HEK293 (cell line): ENCODE measurements at regions of chr4 and their contacts with region 1.

Region 1: DNA sequence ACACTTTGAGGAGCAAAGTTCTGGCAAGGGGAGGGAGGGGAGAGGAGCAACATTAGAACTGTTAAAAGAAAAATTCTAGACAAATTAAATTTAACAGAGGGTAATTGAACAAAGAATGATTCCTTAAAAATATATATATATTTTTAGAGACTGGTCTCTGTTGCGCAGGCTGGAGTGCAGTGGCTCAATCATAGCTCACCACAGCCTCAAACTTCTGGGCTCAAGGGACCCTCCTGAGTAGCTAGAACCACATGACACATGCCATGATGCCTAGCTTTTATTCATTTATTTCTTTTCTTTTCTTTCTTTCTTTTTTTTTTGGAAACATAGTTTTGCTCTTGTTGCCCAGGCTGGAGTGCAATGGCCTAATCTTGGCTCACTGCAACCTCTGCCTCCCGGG is 19.1 kb upstream of the SPINK2 start:
- H3K4me3 ChIP-seq: no peak overlapping the region
- H3K27ac ChIP-seq: no peak overlapping the region
- H3K4me1 ChIP-seq: no peaks in the 10 kb centered on the region
- CTCF ChIP-seq: no peak

Region 2: DNA sequence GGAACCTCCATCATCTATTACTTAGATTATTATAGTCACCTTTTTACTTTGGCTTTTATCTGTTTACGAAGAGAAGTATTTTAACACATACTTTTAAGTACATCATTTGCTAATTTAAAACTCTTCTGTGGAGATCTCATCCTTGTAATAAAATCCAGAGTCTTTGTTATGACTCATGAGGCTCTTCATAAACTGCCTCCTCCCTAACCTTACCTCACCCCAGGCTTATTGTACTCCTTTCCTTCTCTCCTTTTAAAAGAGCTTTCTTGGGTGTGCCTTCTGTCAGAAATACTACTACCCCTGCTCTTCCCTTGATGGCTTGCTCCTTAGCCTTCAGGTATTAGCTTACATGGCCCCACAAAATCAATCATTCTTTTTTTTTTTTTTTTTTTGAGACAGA is 328.4 kb before region 1 on chr4:
- CTCF ChIA-PET with region 1: no interaction called
- POLR2A ChIA-PET with region 1: no interaction called
- H3K4me3 ChIP-seq: no peak overlapping the region
- H3K27ac ChIP-seq: no peak overlapping the region
- H3K4me1 ChIP-seq: no peaks in the 10 kb centered on the region
- CTCF ChIP-seq: no peak

Region 3: GRCh38 chr4:56544573-56545131 is 295.9 kb before region 1 on chr4:
- CTCF ChIA-PET with region 1: interaction called, 12 read pairs
- POLR2A ChIA-PET with region 1: no interaction called
- H3K4me3 ChIP-seq: peak overlapping the region; percentile 53
- H3K27ac ChIP-seq: no peak overlapping the region
- H3K4me1 ChIP-seq: no peaks in the 10 kb centered on the region
- CTCF ChIP-seq: peak; percentile 98